Psoas muscle (tissue), 8 donors: ENCODE measurements at regions of chr20 and their contacts with region 1.

Region 1: GRCh38 chr20:53828682-53829254 is 235.1 kb upstream of the ZNF217 start:
- DNase-seq: no peak
- ATAC-seq: peak; percentile 52 to 72 (median 58)
- H3K4me3 ChIP-seq: peak overlapping the region; percentile 46
- H3K27ac ChIP-seq: peak overlapping the region; percentile 66
- H3K4me1 ChIP-seq: peaks cover 20% of the 10 kb centered on the region
- H3K27me3 ChIP-seq: no peaks in the 10 kb centered on the region
- CTCF ChIP-seq: no peak

Region 2: DNA sequence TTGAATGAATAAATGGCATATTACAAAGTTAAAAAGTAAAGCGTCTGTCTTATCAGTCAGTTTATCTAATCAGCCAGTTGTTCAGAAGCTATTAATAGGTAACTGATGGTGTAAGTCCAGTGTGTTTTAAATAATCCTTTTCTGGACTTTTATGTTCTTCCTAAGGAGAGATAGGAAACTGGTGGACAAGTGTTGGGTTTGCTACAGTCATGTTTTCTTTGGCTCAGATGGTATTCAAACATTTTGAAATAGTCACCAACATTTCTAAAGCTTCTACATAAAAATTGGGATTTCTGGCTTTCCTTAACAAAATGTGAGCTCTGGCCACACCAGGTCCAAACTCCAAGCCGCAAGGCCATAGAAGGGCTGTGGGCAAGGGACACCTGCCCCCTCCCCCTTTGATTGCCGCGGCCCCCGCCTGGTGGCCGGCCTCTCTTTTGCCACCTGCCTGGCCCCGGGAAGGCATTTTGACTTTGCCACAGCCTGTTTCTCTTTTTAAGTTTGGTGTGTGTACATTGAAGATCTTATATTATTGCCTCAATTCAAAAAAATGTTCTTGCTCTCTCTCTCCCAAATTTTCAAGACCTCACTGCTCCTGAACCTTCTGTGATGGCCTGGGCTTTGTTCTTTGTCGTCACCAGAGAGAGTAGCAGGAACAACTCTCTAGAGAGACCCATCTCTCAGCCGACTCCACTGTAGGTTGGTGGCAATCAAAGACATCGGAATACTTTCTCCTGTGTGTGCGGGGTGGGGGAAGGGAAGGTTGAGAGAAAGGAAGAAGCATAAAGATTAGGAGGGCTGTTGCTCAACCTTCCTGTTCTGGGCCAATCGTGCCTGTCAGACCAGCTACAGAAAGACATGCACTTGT is 151.1 kb before region 1 on chr20:
- intact Hi-C with region 1: no loop called
- DNase-seq: no peak
- ATAC-seq: no peak
- H3K4me3 ChIP-seq: no peak overlapping the region
- H3K27ac ChIP-seq: no peak overlapping the region
- H3K4me1 ChIP-seq: no peaks in the 10 kb centered on the region
- H3K27me3 ChIP-seq: no peaks in the 10 kb centered on the region
- CTCF ChIP-seq: no peak

Region 3: GRCh38 chr20:53738039-53738944 is 90.5 kb before region 1 on chr20:
- intact Hi-C with region 1: loop called in 1 of 2 experiments (anchors 5 kb)
- DNase-seq: peak; percentile 40 to 66
- ATAC-seq: peak; percentile 71 to 91 (median 83)
- H3K4me3 ChIP-seq: peak overlapping the region; percentile 24
- H3K27ac ChIP-seq: peak overlapping the region; percentile 60
- H3K4me1 ChIP-seq: peaks cover 12% of the 10 kb centered on the region
- H3K27me3 ChIP-seq: peaks cover 0 to 3% (median 2%) of the 10 kb centered on the region in 3 donors
- CTCF ChIP-seq: no peak